ENCODE measurements at regions of chr17 and their contacts with region 1.

Region 1: DNA sequence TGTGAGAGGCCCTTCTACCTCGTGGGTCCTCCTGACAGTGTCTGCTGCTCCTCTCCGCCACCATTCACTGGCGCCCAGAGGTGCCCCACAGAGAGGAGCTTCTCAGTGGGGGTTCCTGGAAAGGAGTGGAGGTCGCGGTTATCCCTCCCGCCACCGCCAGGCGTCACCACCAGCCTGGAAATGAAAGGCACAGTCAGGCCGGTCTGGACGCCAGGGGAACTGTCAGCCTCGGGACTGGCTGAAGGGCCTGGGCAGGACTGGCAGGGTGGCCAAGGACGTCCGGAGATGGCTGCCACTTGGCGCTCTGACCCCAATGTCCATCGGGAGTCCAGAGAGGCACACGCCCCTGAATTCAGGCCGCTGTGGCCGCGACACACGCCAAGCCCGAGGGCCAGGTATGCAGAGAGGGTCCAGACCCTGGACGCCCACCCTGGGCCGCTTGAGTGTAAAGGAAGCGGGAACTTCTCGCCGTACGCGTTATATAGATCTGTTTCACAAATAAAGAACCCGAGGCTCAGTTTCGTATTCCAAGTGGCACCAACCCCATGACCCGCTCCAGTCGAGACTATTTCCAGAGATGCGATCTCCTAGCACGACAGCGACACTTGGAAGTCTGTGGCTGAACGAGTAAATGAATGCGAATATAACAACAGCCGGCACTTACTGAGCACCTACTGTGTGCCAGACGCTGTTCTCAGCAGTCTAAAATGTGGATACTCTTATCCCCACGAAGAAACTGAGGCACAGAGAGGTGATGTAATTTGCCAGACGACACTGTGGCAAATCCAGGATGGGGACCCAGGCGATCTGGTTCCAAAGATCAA is 7.6 kb upstream of the NXPH3 start:
- DNase-seq: peak; percentile 94
- ATAC-seq: peak; percentile 75

Region 2: DNA sequence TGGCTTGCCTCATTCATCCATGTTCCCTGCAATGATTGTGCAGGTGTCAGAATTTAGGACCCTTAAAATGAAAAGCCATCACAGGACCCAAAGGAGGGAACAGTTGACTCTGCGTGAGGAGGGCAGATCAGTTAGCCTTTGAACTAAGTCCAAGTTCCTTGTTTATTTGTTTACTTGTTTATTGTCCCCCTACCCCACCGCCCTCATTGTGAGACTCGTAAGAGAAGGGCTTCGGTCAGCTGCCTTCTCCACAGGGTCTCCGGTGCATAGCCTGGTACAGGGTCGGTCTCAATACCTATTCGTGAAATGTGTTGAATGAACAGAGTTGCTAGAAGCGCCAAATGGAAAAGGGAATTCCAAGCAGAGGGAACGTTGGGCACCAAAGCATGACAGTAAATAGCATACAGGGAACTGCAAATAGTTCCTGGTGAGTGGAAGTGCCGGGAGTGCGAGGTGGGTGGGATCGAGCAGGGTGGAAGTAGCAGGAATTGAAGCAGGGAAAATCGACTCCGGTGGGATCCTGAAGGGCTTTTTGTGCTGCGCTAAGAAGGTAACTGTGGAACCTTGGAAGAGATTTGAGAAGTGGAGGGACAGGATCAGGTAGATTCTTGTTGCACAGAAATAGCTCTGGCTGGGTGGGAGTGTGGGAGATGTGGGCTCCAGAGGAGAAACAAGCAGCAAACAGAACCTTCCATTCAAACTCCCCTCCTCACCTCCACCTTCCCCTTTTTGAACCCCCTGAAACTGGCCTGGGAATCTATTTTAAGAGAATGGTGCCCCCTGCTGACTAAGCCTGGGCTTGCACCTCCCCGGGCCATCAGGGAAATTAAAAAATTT is 127.0 kb after region 1 on chr17:
- intact Hi-C with region 1: loop called (anchors 1 kb)
- DNase-seq: no peak
- ATAC-seq: peak; percentile 20

Region 3: GRCh38 chr17:49723423-49723822 is 155.3 kb after region 1 on chr17:
- intact Hi-C with region 1: no loop called
- DNase-seq: peak; percentile 82
- ATAC-seq: peak; percentile 94

Region 4: GRCh38 chr17:49851387-49852291 is 283.6 kb after region 1 on chr17:
- intact Hi-C with region 1: loop called (anchors 2 kb)
- DNase-seq: peak; percentile 87
- ATAC-seq: peak; percentile 80